Sigmoid colon (tissue), 7 donors: ENCODE measurements at regions of chr3 and their contacts with region 1.

Region 1: GRCh38 chr3:48088749-48089466 is 72.7 kb upstream of the MAP4 start:
- DNase-seq: peak; percentile 99
- H3K4me3 ChIP-seq: peak overlapping the region; percentile 72 to 99 (median 88)
- H3K27ac ChIP-seq: peak overlapping the region; percentile 96 to 100 (median 99)
- H3K4me1 ChIP-seq: peaks cover 0 to 43% (median 37%) of the 10 kb centered on the region in 4 donors
- H3K27me3 ChIP-seq: no peaks in the 10 kb centered on the region
- CTCF ChIP-seq: no peak
- EP300 ChIP-seq: peak in 1 of 4 donors; percentile 3
- POLR2A ChIP-seq: peak; percentile 79 to 87

Region 2: GRCh38 chr3:48013288-48013980 is 75.5 kb before region 1 on chr3:
- intact Hi-C with region 1: loop called (anchors 2 kb)
- DNase-seq: peak; percentile 83
- H3K4me3 ChIP-seq: peak overlapping the region in 2 of 4 donors; percentile 5 to 7
- H3K27ac ChIP-seq: peak overlapping the region; percentile 69 to 89 (median 84)
- H3K4me1 ChIP-seq: peaks cover 0 to 88% (median 79%) of the 10 kb centered on the region in 4 donors
- H3K27me3 ChIP-seq: no peaks in the 10 kb centered on the region
- CTCF ChIP-seq: no peak
- EP300 ChIP-seq: peak; percentile 32 to 89 (median 72)
- POLR2A ChIP-seq: no peak

Region 3: GRCh38 chr3:48039487-48040190 is 49.3 kb before region 1 on chr3:
- intact Hi-C with region 1: loop called (anchors 5 kb)
- DNase-seq: no peak
- H3K4me3 ChIP-seq: no peak overlapping the region
- H3K27ac ChIP-seq: peak overlapping the region; percentile 50 to 70 (median 64)
- H3K4me1 ChIP-seq: peaks cover 0 to 59% (median 48%) of the 10 kb centered on the region in 4 donors
- H3K27me3 ChIP-seq: no peaks in the 10 kb centered on the region
- CTCF ChIP-seq: no peak
- EP300 ChIP-seq: no peak
- POLR2A ChIP-seq: no peak